ENCODE measurements at regions of chr12 and their contacts with region 1.

Region 1: GRCh38 chr12:75505706-75506312 is 5.6 kb downstream of the KRR1 start:
- DNase-seq: no peak

Region 2: GRCh38 chr12:75334384-75335030 is 171.3 kb before region 1 on chr12 and contains the start of gene GLIPR1L1:
- intact Hi-C with region 1: loop called (anchors 10 kb)
- DNase-seq: peak; percentile 74 to 97 (median 91)

Region 3: GRCh38 chr12:75390899-75391538 is 114.8 kb before region 1 on chr12 and contains the start of gene GLIPR1L2:
- intact Hi-C with region 1: loop called (anchors 10 kb)
- DNase-seq: peak; percentile 90 to 98 (median 96)